PC-9 (cell line): ENCODE measurements at regions of chr1 and their contacts with region 1.

Region 1: GRCh38 chr1:211643324-211644212 is 31.9 kb downstream of the NEK2 start:
- DNase-seq: peak; percentile 90 to 91
- H3K4me3 ChIP-seq: peak overlapping the region; percentile 17; the same call in 1 of the 2 replicates
- H3K27ac ChIP-seq: peak overlapping the region; percentile 92
- H3K4me1 ChIP-seq: peaks cover 97% of the 10 kb centered on the region
- H3K27me3 ChIP-seq: no peaks in the 10 kb centered on the region
- CTCF ChIP-seq: no peak

Region 2: DNA sequence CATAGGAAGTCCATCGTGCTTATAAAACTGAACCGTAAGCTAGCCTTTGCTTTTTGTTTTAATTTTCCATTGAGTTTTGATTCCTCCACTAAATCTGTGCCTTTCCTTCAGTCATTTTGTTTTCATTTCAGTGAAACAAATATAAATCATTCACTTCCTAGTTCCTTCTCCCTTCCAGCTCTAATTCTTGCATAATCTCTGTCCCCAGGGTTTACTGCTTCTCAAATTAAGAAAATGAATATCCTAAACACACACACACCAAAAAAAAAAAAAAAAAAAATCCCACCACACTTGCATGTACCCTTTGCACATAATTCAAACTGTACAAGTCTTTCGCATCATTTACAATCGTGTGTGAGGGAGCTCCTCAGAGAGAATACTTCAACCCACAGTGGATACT is 516.4 kb before region 1 on chr1:
- CTCF ChIA-PET with region 1: no interaction called
- POLR2A ChIA-PET with region 1: no interaction called
- intact Hi-C with region 1: no loop called
- DNase-seq: no peak
- H3K4me3 ChIP-seq: no peak overlapping the region
- H3K27ac ChIP-seq: no peak overlapping the region
- H3K4me1 ChIP-seq: no peaks in the 10 kb centered on the region
- H3K27me3 ChIP-seq: peaks cover 47% of the 10 kb centered on the region
- CTCF ChIP-seq: no peak

Region 3: GRCh38 chr1:211606914-211607755 is 36.4 kb before region 1 on chr1:
- CTCF ChIA-PET with region 1: interaction called, 3 read pairs
- POLR2A ChIA-PET with region 1: interaction called, 10 read pairs
- intact Hi-C with region 1: loop called (anchors 2 kb)
- DNase-seq: peak in 1 of 2 experiments; percentile 81
- H3K4me3 ChIP-seq: peak overlapping the region; percentile 62
- H3K27ac ChIP-seq: peak overlapping the region; percentile 84
- H3K4me1 ChIP-seq: peaks cover 47% of the 10 kb centered on the region
- H3K27me3 ChIP-seq: no peaks in the 10 kb centered on the region
- CTCF ChIP-seq: no peak

Region 4: DNA sequence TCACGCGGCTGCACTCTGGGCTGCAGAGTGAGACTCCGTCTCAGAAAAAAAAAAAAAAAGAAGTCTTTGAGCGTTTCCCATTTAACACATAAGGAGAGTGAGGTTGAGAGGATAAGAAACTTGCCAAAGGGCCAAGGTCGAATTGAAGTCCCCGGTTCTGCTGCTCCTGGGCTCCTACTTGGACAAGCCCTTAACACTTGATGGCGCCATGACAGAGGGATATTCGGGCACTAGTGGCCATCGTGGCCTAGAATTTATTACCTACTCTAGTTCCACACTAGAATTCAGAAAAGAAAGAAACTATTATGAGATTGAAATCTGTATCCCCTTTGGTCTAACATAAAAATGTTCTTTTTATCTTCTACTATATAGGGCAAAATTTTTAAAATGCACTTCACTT is 97.5 kb after region 1 on chr1:
- CTCF ChIA-PET with region 1: no interaction called
- POLR2A ChIA-PET with region 1: interaction called, 12 read pairs
- intact Hi-C with region 1: no loop called
- DNase-seq: no peak
- H3K4me3 ChIP-seq: no peak overlapping the region
- H3K27ac ChIP-seq: no peak overlapping the region
- H3K4me1 ChIP-seq: peaks cover 22% of the 10 kb centered on the region
- H3K27me3 ChIP-seq: no peaks in the 10 kb centered on the region
- CTCF ChIP-seq: no peak